PC-9 (cell line): ENCODE measurements at regions of chr5 and their contacts with region 1.

Region 1: DNA sequence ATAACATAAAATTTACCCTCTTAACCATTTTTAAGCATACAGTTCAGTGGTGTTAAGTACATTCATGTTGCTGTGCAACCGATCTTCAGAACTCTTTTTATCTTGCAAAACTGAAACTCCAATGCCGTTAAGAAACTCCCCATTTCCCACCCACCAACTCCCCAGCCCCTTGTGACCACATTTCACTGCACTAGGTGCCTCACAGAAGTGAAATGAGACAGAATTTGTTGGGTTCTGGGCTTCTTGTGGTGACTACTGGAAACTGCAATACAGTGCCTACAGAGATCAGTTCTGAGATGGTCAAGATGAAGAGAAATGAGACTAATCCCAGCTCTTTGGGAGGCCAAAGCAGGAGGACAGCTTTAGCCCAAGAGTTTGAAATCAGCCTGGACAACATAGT is 202.1 kb upstream of the SLC30A5 start:
- DNase-seq: no peak
- H3K4me3 ChIP-seq: no peak overlapping the region
- H3K27ac ChIP-seq: no peak overlapping the region
- H3K4me1 ChIP-seq: no peaks in the 10 kb centered on the region
- H3K27me3 ChIP-seq: no peaks in the 10 kb centered on the region
- CTCF ChIP-seq: no peak

Region 2: GRCh38 chr5:68618501-68618900 is 273.2 kb before region 1 on chr5:
- CTCF ChIA-PET with region 1: no interaction called
- POLR2A ChIA-PET with region 1: no interaction called
- intact Hi-C with region 1: no loop called
- DNase-seq: no peak
- H3K4me3 ChIP-seq: no peak overlapping the region
- H3K27ac ChIP-seq: no peak overlapping the region
- H3K4me1 ChIP-seq: no peaks in the 10 kb centered on the region
- H3K27me3 ChIP-seq: no peaks in the 10 kb centered on the region
- CTCF ChIP-seq: no peak

Region 3: DNA sequence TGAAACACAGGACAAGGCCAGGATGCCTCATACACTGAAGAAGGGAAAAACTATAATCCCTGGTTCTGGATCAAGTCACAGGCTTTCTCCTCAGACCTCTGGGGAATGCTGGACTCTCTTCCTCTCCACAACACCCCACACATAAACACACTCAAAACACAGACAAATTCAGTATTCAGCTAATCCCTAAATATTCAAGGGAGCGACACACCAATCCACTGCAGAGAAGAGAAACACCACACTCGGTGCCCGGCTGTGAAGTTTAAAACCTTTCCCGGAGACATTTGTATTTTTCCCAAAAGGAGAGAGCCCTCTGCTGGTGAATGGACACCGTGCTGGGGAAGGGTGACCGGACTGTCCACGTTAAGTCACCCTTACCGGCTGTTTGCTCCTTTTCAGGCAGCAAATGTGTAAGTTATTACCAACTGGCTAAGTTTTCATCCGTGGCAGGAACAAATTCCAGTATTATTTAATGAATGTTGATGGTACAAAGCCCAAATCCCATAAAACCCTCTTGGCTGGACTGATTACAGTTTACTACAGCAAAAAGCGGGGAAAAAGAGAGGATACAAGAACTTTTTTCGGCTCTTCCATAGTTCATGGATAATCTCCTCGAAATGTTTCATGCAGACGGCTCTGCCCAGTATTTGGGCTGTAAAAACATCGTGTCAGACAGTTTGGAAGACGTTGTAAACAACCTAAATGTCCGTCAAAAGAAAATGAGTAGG is 71.2 kb after region 1 on chr5:
- CTCF ChIA-PET with region 1: no interaction called
- POLR2A ChIA-PET with region 1: no interaction called
- intact Hi-C with region 1: loop called (anchors 5 kb)
- DNase-seq: peak; percentile 42 to 62
- H3K4me3 ChIP-seq: no peak overlapping the region
- H3K27ac ChIP-seq: no peak overlapping the region
- H3K4me1 ChIP-seq: no peaks in the 10 kb centered on the region
- H3K27me3 ChIP-seq: no peaks in the 10 kb centered on the region
- CTCF ChIP-seq: peak; percentile 83